ENCODE measurements at regions of chr11 and their contacts with region 1.

Region 1: GRCh38 chr11:57667736-57668435 is at the start of gene ZDHHC5:
- DNase-seq: peak; percentile 100
- H3K4me3 ChIP-seq: peak within 1 kb of the TSS; percentile 67 to 98 (median 84)
- H3K27ac ChIP-seq: peak within 1 kb of the TSS; percentile 92 to 99 (median 98)
- H3K4me1 ChIP-seq: peaks cover 0 to 30% (median 28%) of the 10 kb centered on the region in 4 donors
- H3K27me3 ChIP-seq: no peaks in the 10 kb centered on the region
- CTCF ChIP-seq: peak in 1 of 4 experiments; percentile 54
- EP300 ChIP-seq: no peak
- POLR2A ChIP-seq: peak; percentile 37 to 63
- total RNA-seq, gene ZDHHC5: 25.3 to 34.3 (median 28.1) TPM

Region 2: GRCh38 chr11:57335343-57336110 is 332.4 kb before region 1 on chr11 and contains the start of gene SSRP1:
- intact Hi-C with region 1: loop called (anchors 5 kb)
- DNase-seq: peak; percentile 95
- H3K4me3 ChIP-seq: peak within 1 kb of the TSS; percentile 79 to 99 (median 98)
- H3K27ac ChIP-seq: peak within 1 kb of the TSS; percentile 91 to 95 (median 92)
- H3K4me1 ChIP-seq: peaks cover 0 to 22% (median 15%) of the 10 kb centered on the region in 4 donors
- H3K27me3 ChIP-seq: no peaks in the 10 kb centered on the region
- CTCF ChIP-seq: no peak
- EP300 ChIP-seq: no peak
- POLR2A ChIP-seq: peak; percentile 13 to 25
- total RNA-seq, gene SSRP1: 51.4 to 61.1 (median 56.5) TPM

Region 3: GRCh38 chr11:57585301-57585700 is 82.6 kb before region 1 on chr11:
- intact Hi-C with region 1: no loop called
- DNase-seq: no peak
- H3K4me3 ChIP-seq: no peak overlapping the region
- H3K27ac ChIP-seq: no peak overlapping the region
- H3K4me1 ChIP-seq: no peaks in the 10 kb centered on the region
- H3K27me3 ChIP-seq: no peaks in the 10 kb centered on the region
- CTCF ChIP-seq: no peak
- EP300 ChIP-seq: no peak
- POLR2A ChIP-seq: no peak

Region 4: GRCh38 chr11:57741132-57742086 is 73.5 kb after region 1 on chr11 and contains the start of gene SELENOH:
- intact Hi-C with region 1: loop called (anchors 2 kb)
- DNase-seq: peak; percentile 99
- H3K4me3 ChIP-seq: peak within 1 kb of the TSS; percentile 75 to 90 (median 88)
- H3K27ac ChIP-seq: peak within 1 kb of the TSS; percentile 93 to 97 (median 96)
- H3K4me1 ChIP-seq: peaks cover 0 to 21% (median 17%) of the 10 kb centered on the region in 4 donors
- H3K27me3 ChIP-seq: no peaks in the 10 kb centered on the region
- CTCF ChIP-seq: no peak
- EP300 ChIP-seq: peak in 1 of 4 donors; percentile 21
- POLR2A ChIP-seq: peak; percentile 70 to 85
- total RNA-seq, gene SELENOH: 130 to 188 (median 132) TPM

Region 5: DNA sequence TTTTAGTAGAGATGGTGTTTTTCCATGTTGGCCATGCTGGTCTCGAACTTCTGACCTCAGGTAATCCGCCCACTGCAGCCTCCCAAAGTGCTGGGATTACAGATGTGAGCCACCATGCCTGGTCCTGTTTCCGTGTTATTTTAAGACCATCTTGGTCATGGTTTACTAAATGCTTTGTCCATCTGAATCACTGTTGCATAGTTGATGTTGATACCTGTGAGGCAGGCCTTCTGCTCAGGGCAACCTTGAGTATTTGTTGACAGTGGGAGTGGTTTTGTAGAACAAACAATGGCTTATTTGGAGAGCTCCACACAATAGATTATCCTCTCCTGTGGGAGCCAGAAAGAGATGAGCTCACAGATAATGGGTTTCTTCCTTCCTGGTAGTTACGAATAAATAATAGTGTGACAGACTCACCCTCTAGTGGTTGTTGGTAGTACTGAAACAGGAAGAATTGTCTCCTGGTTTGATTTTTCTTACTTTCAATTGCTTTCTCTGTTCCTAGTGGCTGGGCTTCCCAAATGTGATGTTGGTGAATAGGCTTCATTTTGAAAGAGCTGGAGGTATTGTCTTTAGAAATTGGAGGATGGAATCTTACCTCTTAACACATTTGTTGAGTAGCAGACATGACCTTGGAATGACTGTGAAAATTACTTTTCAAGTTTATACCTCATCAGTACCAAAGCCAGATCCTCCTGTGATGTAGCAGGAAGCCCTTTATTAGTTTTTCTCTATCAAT is 132.7 kb after region 1 on chr11:
- intact Hi-C with region 1: loop called (anchors 5 kb)
- DNase-seq: no peak
- H3K4me3 ChIP-seq: no peak overlapping the region
- H3K27ac ChIP-seq: peak overlapping the region; percentile 55 to 76 (median 70)
- H3K4me1 ChIP-seq: peaks cover 0 to 42% (median 35%) of the 10 kb centered on the region in 4 donors
- H3K27me3 ChIP-seq: no peaks in the 10 kb centered on the region
- CTCF ChIP-seq: peak; percentile 75 to 96 (median 83)
- EP300 ChIP-seq: no peak
- POLR2A ChIP-seq: no peak

Region 6: GRCh38 chr11:59550368-59550841 is 1882.5 kb after region 1 on chr11:
- intact Hi-C with region 1: loop called (anchors 10 kb)
- DNase-seq: peak; percentile 91
- H3K4me3 ChIP-seq: peak overlapping the region; percentile 46 to 55 (median 52)
- H3K27ac ChIP-seq: peak overlapping the region; percentile 80 to 87 (median 82)
- H3K4me1 ChIP-seq: peaks cover 0 to 13% (median 3%) of the 10 kb centered on the region in 4 donors
- H3K27me3 ChIP-seq: no peaks in the 10 kb centered on the region
- CTCF ChIP-seq: peak; percentile 46 to 76 (median 54)
- EP300 ChIP-seq: no peak
- POLR2A ChIP-seq: no peak